ENCODE measurements at regions of chr13 and their contacts with region 1.

Region 1: DNA sequence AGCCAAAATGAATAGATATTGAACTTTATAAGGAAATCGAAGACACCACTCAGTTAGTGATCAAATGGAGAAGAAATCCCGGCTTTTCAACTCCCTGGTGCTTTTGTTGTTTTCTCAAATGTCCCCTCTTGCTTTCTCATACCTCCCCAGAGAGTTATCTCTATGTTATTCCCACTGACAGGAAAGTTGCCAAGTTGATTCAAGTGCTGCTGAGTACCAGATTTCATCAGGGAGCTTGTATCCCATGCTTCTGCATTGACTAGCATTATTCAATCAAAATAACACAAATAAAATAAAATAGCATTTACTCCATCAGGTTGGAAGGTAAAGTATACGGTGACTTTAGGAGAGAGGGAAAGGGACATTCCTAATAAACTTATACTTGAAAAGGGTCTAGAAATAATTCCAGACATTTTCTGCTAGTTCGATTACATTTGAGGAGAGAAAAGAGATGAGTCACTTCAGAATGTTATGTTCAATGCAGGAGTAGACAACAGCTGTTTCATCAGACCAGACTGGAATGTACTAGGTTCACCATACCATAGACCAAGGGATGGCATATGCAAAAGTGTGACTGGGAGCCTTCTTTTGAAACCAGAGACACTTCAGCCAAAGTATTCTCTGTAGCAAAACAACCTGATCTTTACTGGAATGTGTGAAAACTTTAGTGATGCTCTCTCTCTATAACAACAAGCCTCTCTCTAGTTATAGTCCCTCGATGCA is 397.8 kb downstream of the FGF14 start:
- DNase-seq: no peak
- ATAC-seq: no peak
- H3K4me3 ChIP-seq: no peak overlapping the region
- H3K27ac ChIP-seq: no peak overlapping the region
- H3K4me1 ChIP-seq: peaks cover 0 to 6% of the 10 kb centered on the region in 2 donors
- H3K27me3 ChIP-seq: no peaks in the 10 kb centered on the region

Region 2: DNA sequence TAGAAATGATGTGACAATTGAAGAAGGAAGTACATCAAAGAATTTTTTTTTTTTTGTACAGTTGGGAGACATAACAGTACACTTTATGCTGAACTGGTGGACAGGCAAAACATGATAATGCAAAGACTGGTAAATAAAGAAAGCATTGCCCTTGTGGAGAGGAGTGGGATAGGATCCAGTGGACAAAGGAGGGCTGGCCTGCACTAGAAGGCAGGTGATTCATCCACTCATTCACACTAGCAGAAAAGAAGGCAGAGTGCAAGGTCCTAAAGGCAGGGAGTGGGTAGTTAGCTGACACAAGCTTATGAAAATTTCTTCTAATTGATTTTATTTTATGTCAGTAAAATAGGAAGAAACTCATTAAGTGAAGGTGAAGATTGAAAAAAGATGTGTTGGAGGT is 570.1 kb before region 1 on chr13:
- intact Hi-C with region 1: no loop called
- DNase-seq: no peak
- ATAC-seq: no peak
- H3K4me3 ChIP-seq: no peak overlapping the region
- H3K27ac ChIP-seq: no peak overlapping the region
- H3K4me1 ChIP-seq: no peaks in the 10 kb centered on the region
- H3K27me3 ChIP-seq: no peaks in the 10 kb centered on the region

Region 3: DNA sequence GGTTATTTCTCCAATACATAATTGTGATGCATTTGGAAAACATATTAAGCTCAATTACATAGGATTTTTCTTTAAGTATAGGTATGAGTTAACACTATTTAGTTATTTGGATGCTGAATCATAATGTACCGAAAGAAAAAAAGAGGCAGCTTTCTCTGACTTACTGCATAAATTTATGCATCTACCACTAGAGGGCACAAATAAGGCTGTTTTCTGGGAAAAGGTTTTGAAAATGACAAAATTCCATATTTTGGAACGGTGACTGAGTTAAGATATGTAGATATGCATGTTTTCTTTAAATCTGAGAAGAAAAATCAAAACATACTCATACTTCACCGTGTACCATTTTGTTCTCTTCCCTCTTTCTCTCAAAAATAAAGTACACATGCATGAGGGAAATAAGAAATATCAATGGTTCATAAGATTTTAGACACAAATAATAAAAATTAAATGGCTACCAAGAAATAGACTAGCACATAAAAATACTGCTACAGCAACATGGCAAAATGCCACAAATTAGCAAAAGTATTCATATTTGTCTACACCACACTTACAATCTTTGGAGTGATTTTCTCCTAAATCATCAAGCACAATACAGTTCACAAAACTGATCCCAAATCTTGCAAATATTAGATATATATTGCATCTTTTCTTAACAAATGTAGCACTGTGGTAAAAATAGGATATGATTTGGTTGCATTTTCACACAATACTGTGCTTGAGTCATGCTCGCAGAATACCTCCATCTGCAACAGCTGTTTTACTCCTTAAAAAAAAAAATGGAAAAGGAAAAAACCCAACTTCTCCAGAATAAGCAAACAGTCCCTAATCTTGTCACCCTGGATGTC is 137.8 kb after region 1 on chr13:
- intact Hi-C with region 1: no loop called
- DNase-seq: no peak
- ATAC-seq: no peak
- H3K4me3 ChIP-seq: no peak overlapping the region
- H3K27ac ChIP-seq: no peak overlapping the region
- H3K4me1 ChIP-seq: peaks cover 0 to 2% of the 10 kb centered on the region in 2 donors
- H3K27me3 ChIP-seq: no peaks in the 10 kb centered on the region

Region 4: DNA sequence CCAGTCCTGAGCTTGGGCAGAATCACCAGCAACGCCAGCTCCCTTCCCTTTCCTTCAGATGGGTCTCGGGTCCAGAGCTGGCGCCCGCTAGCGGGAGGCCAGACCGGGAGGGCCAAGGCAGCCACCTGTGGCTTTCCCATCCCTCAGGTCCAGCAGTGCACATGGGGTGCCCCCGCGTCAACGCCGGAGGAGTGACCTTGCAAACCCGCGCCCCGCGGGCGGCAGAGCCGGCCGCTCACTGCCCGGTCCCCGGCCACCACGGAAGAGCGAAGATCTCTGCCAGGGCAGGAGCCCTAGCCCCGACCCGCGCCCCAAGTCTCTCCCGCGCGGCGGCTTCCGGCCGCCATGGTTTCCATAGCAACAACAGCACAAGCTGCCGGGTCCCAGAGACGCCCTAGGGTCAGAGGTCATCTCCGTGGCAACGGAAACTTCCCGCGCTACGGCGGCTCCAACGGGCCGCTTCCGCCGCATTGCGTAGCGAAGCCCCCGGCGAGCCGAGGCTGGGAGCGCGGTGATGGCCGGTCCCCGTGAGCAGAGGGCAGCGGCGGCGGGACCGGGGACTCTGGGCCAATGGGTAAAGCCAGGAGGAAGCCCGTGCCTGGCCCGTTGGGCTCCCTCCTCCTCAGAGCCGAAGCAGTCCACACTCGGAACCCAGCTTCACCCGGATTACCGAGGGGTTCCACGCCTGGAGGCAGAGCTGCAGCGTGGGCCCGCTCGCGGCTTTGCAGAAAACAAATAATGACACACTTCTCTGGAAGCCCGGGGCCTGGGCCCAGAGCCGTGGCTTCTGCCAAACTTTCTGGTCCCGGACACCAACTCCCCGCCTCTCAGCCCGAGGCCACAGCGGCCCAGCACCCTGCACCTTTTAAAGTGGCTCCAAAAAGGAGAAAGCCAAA is 390.4 kb after region 1 on chr13:
- intact Hi-C with region 1: loop called in 1 of 2 experiments (anchors 5 kb)
- DNase-seq: peak; percentile 97 to 98
- ATAC-seq: peak; percentile 96
- H3K4me3 ChIP-seq: peak overlapping the region; percentile 65 to 89
- H3K27ac ChIP-seq: peak overlapping the region in 1 of 2 donors; percentile 46
- H3K4me1 ChIP-seq: no peaks in the 10 kb centered on the region
- H3K27me3 ChIP-seq: no peaks in the 10 kb centered on the region